MCF 10A (cell line): ENCODE measurements at regions of chr6 and their contacts with region 1.

Region 1: GRCh38 chr6:56757588-56757984 is 114.9 kb upstream of the DST start:
- DNase-seq: peak; percentile 69
- H3K4me3 Mint-ChIP-seq: no peak overlapping the region
- H3K27ac Mint-ChIP-seq: no peak overlapping the region
- H3K4me1 Mint-ChIP-seq: peaks cover 21% of the 10 kb centered on the region
- H3K27me3 Mint-ChIP-seq: no peaks in the 10 kb centered on the region
- CTCF ChIP-seq: peak; percentile 66

Region 2: DNA sequence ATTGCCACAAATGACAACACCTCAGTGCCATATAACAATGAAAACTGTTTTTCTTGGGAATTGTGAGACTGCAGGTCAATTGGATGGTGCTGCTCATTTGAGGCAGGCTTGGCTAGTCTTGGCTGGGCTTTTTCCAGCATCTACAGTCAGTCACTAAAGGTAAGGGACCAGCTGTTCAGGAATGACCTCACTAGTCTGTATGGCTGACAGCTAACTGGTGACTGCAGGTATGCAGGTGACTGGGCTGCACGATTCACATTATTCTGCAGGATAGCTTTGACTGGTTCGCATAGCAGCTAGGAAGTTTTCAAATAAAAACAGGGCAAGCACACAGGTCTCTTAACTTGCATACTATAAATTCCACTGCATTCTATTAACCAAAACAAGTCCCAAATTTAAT is 1156.5 kb before region 1 on chr6:
- CTCF ChIA-PET with region 1: no interaction called
- POLR2A ChIA-PET with region 1: no interaction called
- intact Hi-C with region 1: no loop called
- DNase-seq: no peak
- H3K4me3 Mint-ChIP-seq: no peak overlapping the region
- H3K27ac Mint-ChIP-seq: no peak overlapping the region
- H3K4me1 Mint-ChIP-seq: no peaks in the 10 kb centered on the region
- H3K27me3 Mint-ChIP-seq: no peaks in the 10 kb centered on the region
- CTCF ChIP-seq: no peak

Region 3: DNA sequence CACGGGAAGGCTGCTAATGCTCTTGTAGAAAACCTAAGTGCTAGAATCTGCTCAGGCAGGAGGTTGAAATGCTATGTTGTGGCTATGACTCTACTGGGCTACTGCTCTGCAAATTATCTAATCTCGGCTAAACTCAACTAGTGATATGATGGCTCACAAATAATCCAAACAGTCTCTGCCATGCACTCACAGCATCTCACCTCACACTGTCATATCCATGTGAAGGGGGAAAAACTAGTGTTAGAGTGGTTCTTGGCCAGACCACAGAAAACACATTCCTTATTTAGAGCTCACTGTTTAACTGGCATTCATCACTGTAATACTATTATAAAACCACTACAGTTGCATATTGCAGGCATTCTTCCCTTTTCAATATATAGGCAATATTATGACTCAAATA is 33.1 kb before region 1 on chr6:
- CTCF ChIA-PET with region 1: interaction called, 19 read pairs
- POLR2A ChIA-PET with region 1: interaction called, 24 read pairs
- intact Hi-C with region 1: no loop called
- DNase-seq: no peak
- H3K4me3 Mint-ChIP-seq: no peak overlapping the region
- H3K27ac Mint-ChIP-seq: no peak overlapping the region
- H3K4me1 Mint-ChIP-seq: peaks cover 41% of the 10 kb centered on the region
- H3K27me3 Mint-ChIP-seq: no peaks in the 10 kb centered on the region
- CTCF ChIP-seq: no peak

Region 4: DNA sequence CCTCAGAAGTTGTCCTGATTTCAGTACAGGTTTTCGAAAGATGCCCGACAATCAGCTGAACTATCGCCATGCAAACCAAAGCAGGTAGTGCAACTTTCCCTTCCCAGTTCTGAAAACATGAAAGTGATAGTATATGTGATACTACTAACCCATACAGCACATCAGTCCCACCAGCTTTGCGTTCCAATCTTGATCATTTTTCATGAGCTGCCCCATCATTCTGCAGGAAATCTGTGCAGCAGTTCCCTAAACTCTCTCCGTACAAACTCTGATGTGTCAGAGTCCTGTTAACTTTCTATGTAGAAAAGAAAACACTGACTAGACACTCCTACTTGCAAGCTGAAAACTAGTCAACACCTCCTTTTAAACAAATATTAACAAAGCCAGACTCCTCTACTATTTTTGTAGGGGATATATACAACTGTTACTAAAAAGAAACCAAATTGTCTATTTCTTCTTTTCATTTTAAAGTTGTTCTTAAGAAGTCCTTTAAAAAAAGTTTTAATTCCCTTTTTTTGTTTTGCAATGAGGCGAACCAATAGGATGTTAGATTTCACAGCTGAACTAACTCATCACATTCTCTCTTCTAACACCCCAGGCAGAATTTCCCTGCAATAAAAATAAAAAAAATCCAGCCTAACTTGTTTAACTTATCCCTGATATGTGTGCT is 15.3 kb before region 1 on chr6:
- CTCF ChIA-PET with region 1: interaction called, 16 read pairs
- POLR2A ChIA-PET with region 1: interaction called, 35 read pairs
- intact Hi-C with region 1: no loop called
- DNase-seq: no peak
- H3K4me3 Mint-ChIP-seq: peak overlapping the region; percentile 83
- H3K27ac Mint-ChIP-seq: peak overlapping the region; percentile 94
- H3K4me1 Mint-ChIP-seq: peaks cover 59% of the 10 kb centered on the region
- H3K27me3 Mint-ChIP-seq: no peaks in the 10 kb centered on the region
- CTCF ChIP-seq: no peak

Region 5: DNA sequence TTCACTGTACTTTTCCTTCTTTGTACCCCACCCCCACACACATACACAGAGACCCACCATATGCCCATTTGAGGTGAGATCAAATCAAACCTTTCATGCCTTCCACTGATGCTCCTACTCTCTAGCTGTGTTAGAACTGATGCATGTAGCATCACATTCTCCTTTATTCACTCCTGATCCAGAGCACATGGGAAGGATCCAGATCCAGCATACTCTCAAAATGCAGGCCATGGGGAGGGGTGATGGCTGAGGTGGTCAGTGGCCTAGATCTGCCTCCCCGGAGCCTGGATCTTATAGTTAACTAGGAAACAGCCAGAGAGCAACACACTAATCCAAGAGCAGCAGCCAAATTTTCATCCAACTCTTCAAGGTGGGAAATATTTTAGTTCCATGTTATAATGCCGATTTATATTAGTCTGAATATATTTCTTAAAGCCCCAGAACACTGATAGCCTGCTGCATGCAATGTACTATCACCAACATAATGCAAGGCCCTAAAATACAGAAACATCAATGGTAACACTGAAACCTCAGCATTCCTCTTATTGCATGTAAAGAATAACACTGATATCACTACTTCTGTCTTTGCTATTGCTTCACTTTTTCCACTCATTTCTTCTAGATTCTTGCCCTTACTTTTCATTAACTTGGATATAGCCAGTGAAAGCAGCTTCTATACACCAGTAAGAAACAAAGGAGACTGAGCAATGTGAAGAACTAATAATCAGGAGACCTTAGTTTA is 70.5 kb after region 1 on chr6:
- CTCF ChIA-PET with region 1: no interaction called
- POLR2A ChIA-PET with region 1: no interaction called
- intact Hi-C with region 1: no loop called
- DNase-seq: no peak
- H3K4me3 Mint-ChIP-seq: no peak overlapping the region
- H3K27ac Mint-ChIP-seq: no peak overlapping the region
- H3K4me1 Mint-ChIP-seq: peaks cover 5% of the 10 kb centered on the region
- H3K27me3 Mint-ChIP-seq: no peaks in the 10 kb centered on the region
- CTCF ChIP-seq: no peak

Region 6: DNA sequence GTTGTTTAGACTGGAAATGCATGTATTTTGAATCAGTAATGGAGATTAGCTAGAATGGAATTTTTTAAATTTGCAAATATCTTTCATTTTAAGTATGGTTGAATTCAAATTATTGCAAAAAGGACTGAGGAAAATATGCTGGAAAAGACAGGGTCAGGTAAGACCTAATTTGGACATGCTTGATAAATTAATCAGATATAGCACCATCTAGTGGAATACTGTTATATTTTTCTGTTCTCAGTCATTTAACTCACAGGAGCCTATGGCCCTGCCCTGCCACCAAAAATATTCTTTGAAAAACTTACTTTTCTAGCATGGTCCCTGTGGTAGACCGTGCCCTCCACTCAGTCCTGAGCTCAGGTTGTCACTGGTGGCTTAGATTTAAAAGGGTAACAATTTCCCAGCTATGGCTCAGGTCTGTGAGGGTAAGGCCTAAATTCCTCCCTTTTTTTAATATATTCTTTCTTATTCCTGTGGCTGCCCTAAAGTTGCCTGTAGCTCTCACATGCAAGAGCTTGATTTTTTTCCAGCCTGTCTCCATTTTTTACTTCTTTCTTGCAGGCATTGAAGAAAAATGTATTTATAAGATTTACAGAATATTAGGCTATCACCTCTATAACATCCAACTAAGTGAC is 263.6 kb after region 1 on chr6:
- CTCF ChIA-PET with region 1: no interaction called
- POLR2A ChIA-PET with region 1: no interaction called
- intact Hi-C with region 1: no loop called
- DNase-seq: peak; percentile 42
- H3K4me3 Mint-ChIP-seq: no peak overlapping the region
- H3K27ac Mint-ChIP-seq: no peak overlapping the region
- H3K4me1 Mint-ChIP-seq: no peaks in the 10 kb centered on the region
- H3K27me3 Mint-ChIP-seq: no peaks in the 10 kb centered on the region
- CTCF ChIP-seq: peak; percentile 38